ENCODE measurements at regions of chr11 and their contacts with region 1.

Region 1: DNA sequence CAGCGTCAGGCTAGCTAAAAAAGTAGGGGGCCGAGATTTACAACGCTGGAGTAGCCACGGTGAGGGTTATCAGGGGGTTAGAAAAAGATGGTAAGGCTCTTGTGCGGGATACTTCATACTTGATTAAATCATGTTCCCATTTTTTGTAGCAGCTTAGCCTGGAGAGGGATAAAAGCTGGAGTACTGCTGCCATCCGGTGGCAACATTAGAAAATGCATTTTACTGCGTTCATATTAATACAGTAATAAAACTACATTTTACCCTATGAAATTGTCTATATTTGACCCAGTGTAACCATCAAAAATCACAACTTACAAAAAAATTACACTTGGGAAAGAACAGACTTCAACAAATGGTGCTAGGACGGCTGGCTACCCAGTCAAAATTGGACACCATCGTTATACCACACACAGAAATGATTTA is 17.3 kb downstream of the RPUSD4 start:
- DNase-seq: no peak
- H3K4me3 ChIP-seq: no peak overlapping the region
- H3K27ac ChIP-seq: no peak overlapping the region
- H3K4me1 ChIP-seq: peaks cover 0 to 23% (median 16%) of the 10 kb centered on the region in 4 donors
- H3K27me3 ChIP-seq: no peaks in the 10 kb centered on the region
- CTCF ChIP-seq: peak; percentile 56 to 76 (median 67)
- EP300 ChIP-seq: no peak
- POLR2A ChIP-seq: no peak

Region 2: GRCh38 chr11:125923012-125923579 is 271.0 kb before region 1 on chr11:
- intact Hi-C with region 1: loop called (anchors 1 kb)
- DNase-seq: peak; percentile 79
- H3K4me3 ChIP-seq: no peak overlapping the region
- H3K27ac ChIP-seq: no peak overlapping the region
- H3K4me1 ChIP-seq: peaks cover 0 to 9% (median 4%) of the 10 kb centered on the region in 4 donors
- H3K27me3 ChIP-seq: no peaks in the 10 kb centered on the region
- CTCF ChIP-seq: peak; percentile 70 to 82 (median 76)
- EP300 ChIP-seq: no peak
- POLR2A ChIP-seq: no peak

Region 3: GRCh38 chr11:125941619-125942611 is 252.2 kb before region 1 on chr11:
- intact Hi-C with region 1: loop called (anchors 5 kb)
- DNase-seq: peak; percentile 60
- H3K4me3 ChIP-seq: no peak overlapping the region
- H3K27ac ChIP-seq: no peak overlapping the region
- H3K4me1 ChIP-seq: peaks cover 0 to 17% (median 8%) of the 10 kb centered on the region in 4 donors
- H3K27me3 ChIP-seq: no peaks in the 10 kb centered on the region
- CTCF ChIP-seq: peak in 3 of 4 experiments; percentile 9 to 35 (median 26)
- EP300 ChIP-seq: no peak
- POLR2A ChIP-seq: no peak

Region 4: GRCh38 chr11:126007238-126007637 is 186.9 kb before region 1 on chr11:
- intact Hi-C with region 1: loop called (anchors 5 kb)
- DNase-seq: no peak
- H3K4me3 ChIP-seq: no peak overlapping the region
- H3K27ac ChIP-seq: peak overlapping the region in 3 of 4 donors; percentile 59 to 70 (median 70)
- H3K4me1 ChIP-seq: peaks cover 0 to 21% (median 17%) of the 10 kb centered on the region in 4 donors
- H3K27me3 ChIP-seq: no peaks in the 10 kb centered on the region
- CTCF ChIP-seq: no peak
- EP300 ChIP-seq: no peak
- POLR2A ChIP-seq: no peak